H1 (cell line): ENCODE measurements at regions of chr1 and their contacts with region 1.

Region 1: GRCh38 chr1:56434740-56435139 is 144.6 kb downstream of the PLPP3 start:
- DNase-seq: no peak
- H3K4me3 ChIP-seq: no peak overlapping the region
- H3K27ac ChIP-seq: no peak overlapping the region
- H3K4me1 ChIP-seq: peaks cover 15 to 28% (median 23%) of the 10 kb centered on the region in 4 experiments
- H3K27me3 ChIP-seq: no peaks in the 10 kb centered on the region; a peak in 2 of 7 replicates
- CTCF ChIP-seq: peak; percentile 1 to 58 (median 50); a peak in 2 of 4 replicates
- EP300 ChIP-seq: no peak
- POLR2A ChIP-seq: no peak
- RAD21 ChIP-seq: peak; percentile 32 to 48; a peak in 3 of 4 replicates

Region 2: GRCh38 chr1:56446531-56447098 is 11.9 kb after region 1 on chr1:
- CTCF ChIA-PET with region 1: interaction called, 21 read pairs
- POLR2A ChIA-PET with region 1: interaction called, 4 read pairs
- DNase-seq: no peak
- H3K4me3 ChIP-seq: no peak overlapping the region
- H3K27ac ChIP-seq: no peak overlapping the region
- H3K4me1 ChIP-seq: peaks cover 2 to 17% (median 7%) of the 10 kb centered on the region in 4 experiments; a peak in 6 of 7 replicates
- H3K27me3 ChIP-seq: peaks cover 0 to 2% (median under 1%) of the 10 kb centered on the region in 4 experiments; a peak in 2 of 7 replicates
- CTCF ChIP-seq: no peak
- EP300 ChIP-seq: no peak
- POLR2A ChIP-seq: no peak
- RAD21 ChIP-seq: no peak

Region 3: DNA sequence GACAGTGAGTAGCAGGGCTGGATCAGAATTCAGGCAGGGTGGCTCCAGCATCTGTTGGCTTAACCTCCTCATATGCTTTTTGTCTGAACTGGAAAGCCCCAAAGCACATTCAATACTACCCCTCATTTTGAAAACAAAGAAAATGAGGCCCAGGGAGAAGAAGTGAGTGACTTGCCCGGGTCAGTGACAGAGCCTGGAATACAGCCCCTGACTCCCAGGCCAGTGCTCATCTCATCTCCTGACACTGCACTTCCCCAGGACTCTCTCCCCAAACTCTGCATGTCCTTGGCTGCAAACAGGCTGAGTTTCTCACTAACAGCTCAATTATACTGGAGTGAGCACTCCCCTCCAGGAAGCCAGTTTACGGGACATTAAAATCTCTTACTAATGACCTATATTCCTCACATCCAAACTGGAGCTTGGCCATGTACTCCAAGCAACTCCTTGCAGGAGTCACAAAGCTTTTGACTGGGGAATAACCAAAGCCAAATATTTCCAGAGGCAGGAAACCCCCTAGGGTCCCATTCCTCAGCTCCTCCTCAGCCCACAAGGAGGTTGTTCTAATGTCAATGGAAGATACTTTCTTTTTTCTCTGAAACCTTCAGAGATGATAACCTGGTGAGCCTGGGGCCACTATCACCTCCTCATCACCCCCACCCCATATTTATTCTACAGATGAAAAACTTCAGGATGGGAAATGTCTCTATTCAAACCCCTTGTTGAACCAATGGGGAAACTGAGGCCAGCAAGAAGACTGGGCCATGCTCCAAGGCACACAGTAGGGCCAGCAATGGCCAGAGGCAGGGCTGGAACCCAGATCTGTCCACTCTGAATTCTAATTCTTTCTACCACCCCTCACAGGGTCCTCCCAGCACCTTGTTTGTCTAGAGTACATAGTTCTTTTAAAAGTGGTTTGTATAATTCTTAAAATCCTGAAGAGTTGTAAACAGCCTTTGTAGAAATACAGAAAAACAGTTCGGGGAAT is 17.6 kb after region 1 on chr1:
- CTCF ChIA-PET with region 1: interaction called, 21 read pairs
- POLR2A ChIA-PET with region 1: interaction called, 16 read pairs
- DNase-seq: no peak
- H3K4me3 ChIP-seq: no peak overlapping the region
- H3K27ac ChIP-seq: no peak overlapping the region
- H3K4me1 ChIP-seq: peaks cover 11 to 31% (median 26%) of the 10 kb centered on the region in 4 experiments
- H3K27me3 ChIP-seq: peaks cover 0 to 2% (median 0%) of the 10 kb centered on the region in 4 experiments; a peak in 1 of 7 replicates
- CTCF ChIP-seq: no peak
- EP300 ChIP-seq: no peak
- POLR2A ChIP-seq: no peak
- RAD21 ChIP-seq: no peak

Region 4: DNA sequence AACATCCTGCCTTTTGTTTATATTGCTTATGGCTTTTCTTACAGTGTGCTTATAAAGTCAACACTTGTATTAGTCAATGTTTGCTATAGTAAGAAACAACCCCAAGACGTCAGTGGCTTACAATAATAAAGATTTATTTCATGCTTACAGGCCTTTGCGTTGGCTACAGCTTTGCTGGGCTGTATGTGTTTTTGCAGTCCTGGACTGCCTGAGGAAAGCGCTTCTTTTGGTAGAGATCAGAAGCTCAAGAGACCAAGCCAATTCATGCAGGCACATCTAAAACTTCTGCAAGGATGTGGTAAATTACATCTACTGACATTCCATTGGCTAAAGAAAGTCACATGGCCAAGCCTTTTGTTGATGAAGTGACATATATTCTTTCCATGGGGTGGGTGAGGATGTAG is 192.9 kb after region 1 on chr1:
- CTCF ChIA-PET with region 1: no interaction called
- POLR2A ChIA-PET with region 1: no interaction called
- DNase-seq: no peak
- H3K4me3 ChIP-seq: no peak overlapping the region
- H3K27ac ChIP-seq: no peak overlapping the region
- H3K4me1 ChIP-seq: peaks cover 0 to 2% (median 0%) of the 10 kb centered on the region in 4 experiments; a peak in 1 of 7 replicates
- H3K27me3 ChIP-seq: no peaks in the 10 kb centered on the region
- CTCF ChIP-seq: no peak
- EP300 ChIP-seq: no peak
- POLR2A ChIP-seq: no peak
- RAD21 ChIP-seq: no peak